ENCODE measurements at regions of chr3 and their contacts with region 1.

Region 1: GRCh38 chr3:159804726-159805410 is 183.8 kb upstream of the IL12A start:
- DNase-seq: peak; percentile 14
- H3K4me3 Mint-ChIP-seq: no peak overlapping the region
- H3K27ac Mint-ChIP-seq: no peak overlapping the region
- H3K4me1 Mint-ChIP-seq: no peaks in the 10 kb centered on the region
- H3K27me3 Mint-ChIP-seq: peaks cover 10% of the 10 kb centered on the region

Region 2: GRCh38 chr3:158845765-158846350 is 959.0 kb before region 1 on chr3:
- intact Hi-C with region 1: loop called (anchors 10 kb)
- DNase-seq: no peak
- H3K4me3 Mint-ChIP-seq: no peak overlapping the region
- H3K27ac Mint-ChIP-seq: no peak overlapping the region
- H3K4me1 Mint-ChIP-seq: peaks cover 8% of the 10 kb centered on the region
- H3K27me3 Mint-ChIP-seq: no peaks in the 10 kb centered on the region

Region 3: DNA sequence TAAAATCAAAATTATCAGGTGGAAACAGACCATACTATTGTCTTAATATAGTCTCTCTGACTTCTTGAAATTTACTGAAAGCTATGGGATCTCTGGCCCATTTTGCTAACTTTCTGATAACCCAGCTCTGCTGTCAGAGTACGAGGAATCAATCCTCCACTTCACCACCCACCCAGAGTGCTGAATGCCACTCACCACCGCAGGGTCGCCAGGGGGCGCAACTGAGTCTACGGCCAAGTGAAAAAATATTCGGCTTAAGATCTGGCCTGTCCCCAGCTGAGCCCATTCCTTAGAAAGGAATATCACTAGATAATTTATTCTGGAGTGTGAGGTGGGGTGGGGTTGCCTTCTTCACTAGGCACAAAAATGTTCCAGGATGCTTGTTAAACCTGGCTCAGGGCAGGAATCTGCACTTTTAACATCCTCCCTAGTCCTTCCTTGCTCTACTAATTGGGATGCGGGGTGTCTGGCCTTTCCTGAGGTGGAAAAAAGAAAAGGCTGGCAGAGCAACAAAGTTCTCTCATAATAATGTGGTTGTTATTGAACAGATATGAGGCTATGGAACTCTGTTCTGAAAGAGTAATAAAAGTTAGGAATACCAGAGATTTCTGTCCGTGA is 482.4 kb before region 1 on chr3:
- intact Hi-C with region 1: loop called (anchors 1 kb)
- DNase-seq: no peak
- H3K4me3 Mint-ChIP-seq: no peak overlapping the region
- H3K27ac Mint-ChIP-seq: no peak overlapping the region
- H3K4me1 Mint-ChIP-seq: no peaks in the 10 kb centered on the region
- H3K27me3 Mint-ChIP-seq: no peaks in the 10 kb centered on the region

Measured in activated T-helper 2 cell treated with anti-CD3 and anti-CD28 coated beads, Interferon-gamma antibody, Interleukin-2, Interleukin-4, amounts not matched to agents 10 μg/mL and 5 μg/mL and 100 μg/mL, durations not matched to agents 14 hours and 24 hours and 36 hours (primary cell).